ENCODE measurements at regions of chr5 and their contacts with region 1.

Region 1: DNA sequence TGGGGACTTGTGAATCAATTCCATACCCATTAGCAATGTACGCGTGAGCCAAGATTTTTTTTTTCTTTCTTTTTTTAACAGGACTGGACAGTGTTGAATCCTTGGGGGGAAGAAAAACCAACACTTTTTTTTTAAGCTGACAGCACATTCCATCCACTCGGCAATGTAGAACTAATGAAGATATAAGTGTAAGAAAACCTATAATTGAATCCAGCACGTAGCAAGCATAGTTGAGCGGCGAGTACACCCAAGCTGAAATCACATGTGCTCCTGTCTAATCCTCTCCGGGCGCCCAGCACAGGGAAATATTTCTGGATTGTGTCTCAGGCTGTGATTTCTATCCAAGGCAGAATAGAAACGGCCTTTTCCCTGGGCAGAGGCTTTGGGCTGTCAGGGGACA is 118.2 kb downstream of the BOD1 start:
- DNase-seq: peak; percentile 87
- H3K4me3 ChIP-seq: no peak overlapping the region
- CTCF ChIP-seq: no peak

Region 2: DNA sequence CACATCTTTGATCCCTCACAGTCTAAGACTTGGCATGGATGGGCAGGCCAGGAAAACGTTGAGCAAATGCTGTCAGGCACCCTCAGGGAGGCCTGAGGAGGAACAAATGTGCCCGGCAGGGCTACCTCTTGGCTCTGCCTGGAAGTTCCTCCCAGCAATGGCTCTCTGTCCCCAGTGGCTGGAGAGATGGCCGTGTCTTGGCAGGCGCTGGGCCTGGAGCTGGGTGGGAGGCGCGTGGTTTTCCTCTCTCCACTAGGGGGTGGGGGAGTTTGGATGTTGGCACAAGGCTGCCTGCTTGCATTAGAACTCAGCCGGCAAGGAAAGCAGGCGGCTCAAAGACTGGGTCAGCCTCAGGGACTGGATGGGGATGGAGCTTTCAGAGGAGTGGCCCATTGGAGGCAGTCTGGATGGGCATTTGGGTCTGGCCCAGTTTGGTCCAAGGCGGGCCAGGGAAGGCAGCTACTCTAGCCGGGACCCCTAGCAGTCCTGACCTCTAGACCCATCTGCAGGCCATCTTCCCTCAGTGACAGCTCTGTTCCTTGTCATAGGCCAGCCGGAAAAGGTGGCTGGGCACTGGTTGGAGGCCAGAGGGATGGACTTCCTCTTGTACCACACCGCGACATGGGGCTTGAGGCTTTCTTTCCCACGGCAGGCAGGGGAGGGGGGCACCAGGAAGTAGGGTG is 101.8 kb before region 1 on chr5:
- in situ Hi-C with region 1: no loop called
- DNase-seq: no peak
- H3K4me3 ChIP-seq: no peak overlapping the region
- CTCF ChIP-seq: no peak

Region 3: GRCh38 chr5:173536312-173536641 is 38.0 kb after region 1 on chr5:
- in situ Hi-C with region 1: no loop called
- DNase-seq: no peak
- H3K4me3 ChIP-seq: no peak overlapping the region
- CTCF ChIP-seq: no peak

Region 4: DNA sequence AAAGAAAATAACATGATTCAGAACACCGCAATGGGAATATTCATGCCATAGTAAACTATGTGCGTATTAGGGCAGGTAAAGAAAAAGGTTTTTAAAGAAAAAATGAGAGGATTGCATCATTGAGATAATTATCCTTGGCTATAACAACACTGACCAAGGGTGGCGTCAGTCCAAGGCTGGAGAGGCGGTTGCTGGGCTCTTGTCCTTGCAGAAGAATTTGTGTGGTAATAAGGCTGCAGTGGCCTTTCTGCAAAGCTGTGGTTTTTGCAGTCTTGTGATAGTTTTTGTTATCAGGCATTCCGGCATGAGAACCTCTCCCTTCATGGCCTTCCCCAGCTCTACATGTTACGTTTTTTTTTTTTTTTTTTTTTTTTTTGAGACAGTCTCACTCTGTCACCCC is 104.1 kb after region 1 on chr5:
- in situ Hi-C with region 1: loop called (anchors 5 kb)
- DNase-seq: peak; percentile 59
- H3K4me3 ChIP-seq: no peak overlapping the region
- CTCF ChIP-seq: no peak

Measured in astrocyte of the cerebellum (primary cell).